Spleen (tissue), 13 donors: ENCODE measurements at regions of chr9 and their contacts with region 1.

Region 1: DNA sequence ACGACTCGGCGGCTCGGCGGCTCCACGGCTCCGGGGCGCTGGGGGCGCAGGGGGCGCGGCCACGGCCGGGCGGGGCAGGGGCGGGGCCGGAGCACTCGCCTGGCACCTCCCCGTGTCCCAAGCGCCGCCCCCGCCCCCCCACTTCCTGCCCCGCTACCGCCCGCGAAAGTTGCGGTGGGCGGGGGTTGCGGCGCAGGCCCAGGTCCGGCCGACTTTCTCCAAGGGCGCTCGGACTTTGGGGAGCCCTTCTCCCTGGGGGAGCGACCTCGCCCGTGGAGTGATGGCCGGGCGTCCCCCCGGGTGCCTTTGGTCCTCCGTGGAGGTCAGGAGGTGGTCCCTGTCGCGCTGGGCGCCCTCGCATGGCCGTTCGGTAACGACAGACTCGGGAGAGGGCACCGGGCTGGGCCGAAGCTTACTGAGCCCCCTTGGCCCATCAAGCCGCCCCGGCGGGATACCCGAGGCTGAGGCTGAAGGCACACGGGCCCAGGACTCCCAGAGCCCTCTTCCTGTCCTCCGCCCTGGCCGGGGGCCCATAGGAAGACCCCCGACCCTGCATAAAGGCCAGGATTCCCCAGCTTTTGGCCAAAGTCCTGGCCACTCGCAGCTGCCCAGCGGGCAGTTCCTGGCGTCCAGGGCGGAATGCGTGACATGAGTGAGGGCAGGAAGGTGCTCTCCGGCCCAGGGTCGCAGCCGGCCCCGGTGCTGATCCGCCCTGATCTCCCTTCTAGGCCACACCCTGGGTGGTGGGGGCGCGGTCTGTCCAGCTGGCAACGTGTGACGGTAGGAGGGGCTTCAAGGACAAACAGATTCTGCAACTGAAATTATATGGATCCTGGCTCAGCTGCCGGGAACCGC is 883 bp upstream of the VAV2 start:
- DNase-seq: peak; percentile 92
- H3K4me3 ChIP-seq: peak overlapping the region; percentile 59 to 93 (median 70)
- H3K27ac ChIP-seq: peak overlapping the region; percentile 80 to 94 (median 90)
- H3K4me1 ChIP-seq: peaks cover 27 to 51% (median 40%) of the 10 kb centered on the region in 6 donors
- H3K27me3 ChIP-seq: peaks cover 0 to 84% (median 17%) of the 10 kb centered on the region in 7 donors
- CTCF ChIP-seq: peak in 5 of 11 experiments; percentile 25 to 51 (median 50)
- POLR2A ChIP-seq: peak in 1 of 3 donors; percentile 48

Region 2: GRCh38 chr9:133792721-133793470 is 200.1 kb before region 1 on chr9:
- intact Hi-C with region 1: loop called (anchors 5 kb)
- DNase-seq: peak; percentile 91
- H3K4me3 ChIP-seq: peak overlapping the region in 3 of 8 donors; percentile 5 to 55 (median 18)
- H3K27ac ChIP-seq: peak overlapping the region in 2 of 8 donors; percentile 36 to 51
- H3K4me1 ChIP-seq: peaks cover 16 to 63% (median 47%) of the 10 kb centered on the region in 6 donors
- H3K27me3 ChIP-seq: peaks cover 0 to 59% (median 0%) of the 10 kb centered on the region in 7 donors
- CTCF ChIP-seq: peak; percentile 92 to 97 (median 96)
- POLR2A ChIP-seq: no peak

Region 3: DNA sequence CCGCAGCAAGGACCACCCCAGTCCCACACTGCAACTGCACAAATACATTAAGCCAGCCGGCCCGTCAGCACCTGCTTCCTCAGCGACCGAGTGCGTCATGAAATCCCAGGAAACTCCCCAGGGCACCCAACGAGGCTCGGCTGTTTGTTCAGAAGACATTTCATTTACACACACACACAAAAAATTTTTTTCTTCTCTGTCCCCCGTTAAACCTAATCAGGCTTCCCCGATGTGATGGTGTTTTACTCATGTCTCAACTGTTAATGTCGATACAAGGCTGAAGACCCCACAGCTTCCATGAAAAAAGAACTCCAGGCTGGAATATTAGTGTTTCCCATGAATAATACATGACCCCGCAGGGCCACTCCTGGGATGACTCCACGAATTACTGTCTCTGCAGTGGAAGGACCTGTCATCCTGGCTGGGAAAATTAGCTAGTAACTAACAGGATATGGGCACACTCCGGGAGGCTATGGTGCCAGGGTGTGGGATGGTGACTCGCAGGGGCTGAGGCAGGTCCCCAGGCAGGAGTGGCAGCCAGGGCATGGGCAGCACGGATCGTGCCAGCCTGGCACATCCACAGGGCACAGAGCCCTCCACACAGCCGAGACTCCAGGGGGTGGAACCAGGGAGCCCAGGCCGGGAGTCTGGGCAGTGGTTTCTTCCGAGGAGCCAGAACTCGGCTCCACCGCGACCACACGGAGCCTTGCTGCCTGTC is 103.3 kb before region 1 on chr9:
- intact Hi-C with region 1: no loop called
- DNase-seq: no peak
- H3K4me3 ChIP-seq: no peak overlapping the region
- H3K27ac ChIP-seq: peak overlapping the region in 4 of 8 donors; percentile 40 to 67 (median 52)
- H3K4me1 ChIP-seq: peaks cover 0 to 37% (median 3%) of the 10 kb centered on the region in 6 donors
- H3K27me3 ChIP-seq: no peaks in the 10 kb centered on the region
- CTCF ChIP-seq: no peak
- POLR2A ChIP-seq: no peak

Region 4: GRCh38 chr9:134040781-134041648 is 48.0 kb after region 1 on chr9:
- intact Hi-C with region 1: no loop called
- DNase-seq: no peak
- H3K4me3 ChIP-seq: no peak overlapping the region
- H3K27ac ChIP-seq: no peak overlapping the region
- H3K4me1 ChIP-seq: peaks cover 0 to 15% (median 4%) of the 10 kb centered on the region in 6 donors
- H3K27me3 ChIP-seq: no peaks in the 10 kb centered on the region
- CTCF ChIP-seq: no peak
- POLR2A ChIP-seq: no peak